Uterus (tissue), 4 donors: ENCODE measurements at regions of chr17 and their contacts with region 1.

Region 1: DNA sequence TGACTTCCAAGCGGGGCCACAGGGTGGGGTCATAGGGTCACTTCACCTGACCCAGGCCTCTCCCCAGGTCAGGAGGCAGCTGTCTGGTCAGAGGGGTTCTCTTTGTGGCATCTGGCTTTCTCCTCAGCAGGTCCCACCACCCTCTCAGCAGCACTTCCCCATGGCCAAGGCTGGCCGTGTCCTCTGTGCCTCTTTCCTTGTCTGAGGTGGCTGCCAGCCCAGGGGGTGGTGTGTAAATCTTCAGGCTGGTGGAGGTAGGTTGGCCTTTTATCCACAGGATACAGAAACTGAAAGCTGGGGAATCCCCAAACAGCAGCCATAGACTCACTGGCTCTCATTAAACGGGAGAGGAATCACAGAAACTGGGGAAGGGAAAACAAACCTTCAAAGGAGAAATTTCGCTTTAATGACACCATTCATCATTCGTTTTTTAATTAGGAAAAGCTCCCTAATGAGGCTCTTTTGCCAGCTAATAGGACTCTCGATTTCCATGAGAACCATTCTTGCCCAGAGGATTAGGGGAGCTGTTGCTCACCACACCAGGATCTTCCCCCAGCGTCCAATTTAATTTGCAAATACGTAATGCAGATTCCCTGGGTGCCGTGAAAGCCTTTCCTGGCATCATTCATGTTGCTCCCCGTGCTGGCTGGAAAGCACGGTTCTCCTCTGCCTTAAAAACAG is 18.0 kb downstream of the C17orf75 start:
- DNase-seq: no peak
- H3K4me3 ChIP-seq: no peak overlapping the region
- H3K27ac ChIP-seq: peak overlapping the region; percentile 10 to 26
- H3K4me1 ChIP-seq: no peaks in the 10 kb centered on the region
- H3K27me3 ChIP-seq: no peaks in the 10 kb centered on the region
- CTCF ChIP-seq: no peak
- POLR2A ChIP-seq: no peak

Region 2: GRCh38 chr17:32191306-32191705 is 132.6 kb before region 1 on chr17:
- intact Hi-C with region 1: no loop called
- DNase-seq: no peak
- H3K4me3 ChIP-seq: no peak overlapping the region
- H3K27ac ChIP-seq: no peak overlapping the region
- H3K4me1 ChIP-seq: no peaks in the 10 kb centered on the region
- H3K27me3 ChIP-seq: no peaks in the 10 kb centered on the region
- CTCF ChIP-seq: no peak
- POLR2A ChIP-seq: no peak

Region 3: GRCh38 chr17:32259586-32259985 is 64.4 kb before region 1 on chr17:
- intact Hi-C with region 1: loop called (anchors 5 kb)
- DNase-seq: no peak
- H3K4me3 ChIP-seq: no peak overlapping the region
- H3K27ac ChIP-seq: no peak overlapping the region
- H3K4me1 ChIP-seq: no peaks in the 10 kb centered on the region
- H3K27me3 ChIP-seq: no peaks in the 10 kb centered on the region
- CTCF ChIP-seq: no peak
- POLR2A ChIP-seq: no peak